ENCODE measurements at regions of chr12 and their contacts with region 1.

Region 1: GRCh38 chr12:1117970-1118563 is 127.0 kb downstream of the ERC1 start:
- DNase-seq: no peak
- ATAC-seq: peak; percentile 94
- H3K4me3 ChIP-seq: no peak overlapping the region
- H3K27ac ChIP-seq: no peak overlapping the region
- H3K4me1 ChIP-seq: no peaks in the 10 kb centered on the region
- H3K27me3 ChIP-seq: no peaks in the 10 kb centered on the region
- CTCF ChIP-seq: peak; percentile 97

Region 2: DNA sequence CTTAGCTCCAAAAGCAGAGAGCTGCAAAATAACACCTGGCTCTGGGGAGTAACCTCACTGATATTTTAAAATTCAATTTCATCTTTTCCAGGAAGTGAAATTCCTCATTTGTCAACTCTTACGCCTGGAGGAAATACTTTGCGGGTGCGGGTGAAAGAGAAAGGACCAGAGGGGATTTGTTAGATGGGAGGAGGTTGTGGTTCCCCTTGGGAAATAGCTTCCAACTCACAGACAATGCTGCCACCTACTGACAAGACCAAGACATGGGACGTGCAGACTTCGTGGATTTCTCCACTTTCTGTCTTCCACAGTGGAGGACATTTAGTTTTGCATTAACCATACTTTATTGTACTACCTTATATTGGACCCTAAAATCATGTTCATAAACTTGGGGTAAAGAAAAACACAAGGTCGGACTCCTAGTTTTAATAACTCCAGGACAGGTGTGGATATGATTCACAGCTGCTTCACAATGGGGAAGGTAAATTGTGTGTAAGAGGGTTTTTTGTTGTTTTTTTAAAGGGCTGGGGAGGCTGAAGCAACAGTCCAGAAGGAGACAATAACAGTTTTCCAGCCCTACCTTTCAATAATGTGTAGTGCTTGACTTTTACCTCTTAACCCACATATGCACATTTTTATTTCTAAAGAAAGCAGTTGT is 465.5 kb after region 1 on chr12:
- intact Hi-C with region 1: loop called (anchors 5 kb)
- DNase-seq: no peak
- ATAC-seq: peak; percentile 95
- H3K4me3 ChIP-seq: no peak overlapping the region
- H3K27ac ChIP-seq: no peak overlapping the region
- H3K4me1 ChIP-seq: no peaks in the 10 kb centered on the region
- H3K27me3 ChIP-seq: no peaks in the 10 kb centered on the region
- CTCF ChIP-seq: peak; percentile 90